Ascending aorta (tissue), 2 donors: ENCODE measurements at regions of chr3 and their contacts with region 1.

Region 1: DNA sequence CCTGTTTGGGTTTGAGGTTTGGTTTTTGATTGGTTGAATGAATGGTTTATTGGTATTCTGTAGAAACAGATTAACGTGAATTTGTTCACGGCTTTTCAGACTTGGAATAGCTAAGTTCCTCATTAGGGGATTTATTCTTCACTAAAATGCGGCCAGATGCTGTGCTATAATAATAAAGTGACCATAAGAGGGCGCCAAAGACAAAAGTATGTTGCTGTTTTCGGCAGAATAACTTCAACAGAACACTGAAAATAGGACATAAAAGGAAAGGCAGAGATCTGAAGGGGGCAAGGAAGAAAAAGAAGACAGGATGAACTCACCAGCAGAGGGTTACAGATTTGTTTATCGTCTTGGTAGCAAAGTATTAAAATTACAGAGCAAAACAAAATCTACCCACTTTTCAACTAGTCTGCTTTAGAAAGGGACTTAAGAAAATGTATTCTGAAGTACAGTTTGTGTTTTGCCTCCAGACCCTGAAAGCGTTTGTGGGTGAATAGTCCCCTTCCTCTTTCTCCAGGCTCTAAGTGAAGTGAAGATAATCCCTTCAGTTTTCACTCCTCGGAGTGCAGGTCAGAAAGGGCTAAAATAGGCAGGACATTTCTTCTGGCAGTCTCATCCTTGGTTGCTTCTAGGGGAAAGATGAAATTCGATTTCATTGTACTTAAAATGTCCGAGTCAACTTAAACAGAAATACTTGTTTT is 147.6 kb downstream of the IL20RB start:
- DNase-seq: no peak
- H3K4me3 ChIP-seq: peak overlapping the region in 1 of 2 donors; percentile 3
- H3K27ac ChIP-seq: no peak overlapping the region
- H3K4me1 ChIP-seq: no peaks in the 10 kb centered on the region
- H3K27me3 ChIP-seq: no peaks in the 10 kb centered on the region
- CTCF ChIP-seq: peak; percentile 29 to 72 (median 51)

Region 2: DNA sequence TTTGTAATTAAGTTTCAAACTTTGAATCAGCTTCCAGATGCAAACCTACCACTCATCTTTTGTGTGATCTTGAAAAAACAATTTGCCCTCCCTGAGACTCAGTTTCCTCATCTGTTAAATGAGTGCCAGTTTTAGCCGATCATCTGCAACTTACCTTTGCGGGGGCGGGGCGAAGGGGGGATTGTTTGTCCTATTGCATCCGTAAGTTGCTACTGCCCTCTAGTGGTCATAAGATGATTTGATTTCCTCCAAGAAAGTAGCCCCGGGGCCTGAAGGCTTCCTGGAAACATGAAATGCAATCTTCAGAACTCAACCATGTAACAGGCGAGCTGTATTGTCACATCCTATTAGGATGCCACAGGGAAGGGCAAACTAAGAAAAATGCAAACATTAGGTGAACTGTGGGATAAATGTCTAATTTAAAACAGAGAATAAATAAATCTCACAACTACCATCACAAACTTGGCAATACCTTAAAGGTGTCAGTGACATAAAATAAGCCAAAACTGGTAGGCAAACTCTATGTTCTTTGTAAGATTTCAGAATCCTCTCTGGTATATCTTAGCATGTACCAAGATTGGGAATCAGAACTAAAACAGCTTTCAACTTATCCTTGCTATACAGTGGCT is 841.0 kb after region 1 on chr3:
- intact Hi-C with region 1: loop called (anchors 2 kb)
- DNase-seq: no peak
- H3K4me3 ChIP-seq: no peak overlapping the region
- H3K27ac ChIP-seq: no peak overlapping the region
- H3K4me1 ChIP-seq: no peaks in the 10 kb centered on the region
- H3K27me3 ChIP-seq: no peaks in the 10 kb centered on the region
- CTCF ChIP-seq: peak in 2 of 3 experiments; percentile 38 to 49

Region 3: DNA sequence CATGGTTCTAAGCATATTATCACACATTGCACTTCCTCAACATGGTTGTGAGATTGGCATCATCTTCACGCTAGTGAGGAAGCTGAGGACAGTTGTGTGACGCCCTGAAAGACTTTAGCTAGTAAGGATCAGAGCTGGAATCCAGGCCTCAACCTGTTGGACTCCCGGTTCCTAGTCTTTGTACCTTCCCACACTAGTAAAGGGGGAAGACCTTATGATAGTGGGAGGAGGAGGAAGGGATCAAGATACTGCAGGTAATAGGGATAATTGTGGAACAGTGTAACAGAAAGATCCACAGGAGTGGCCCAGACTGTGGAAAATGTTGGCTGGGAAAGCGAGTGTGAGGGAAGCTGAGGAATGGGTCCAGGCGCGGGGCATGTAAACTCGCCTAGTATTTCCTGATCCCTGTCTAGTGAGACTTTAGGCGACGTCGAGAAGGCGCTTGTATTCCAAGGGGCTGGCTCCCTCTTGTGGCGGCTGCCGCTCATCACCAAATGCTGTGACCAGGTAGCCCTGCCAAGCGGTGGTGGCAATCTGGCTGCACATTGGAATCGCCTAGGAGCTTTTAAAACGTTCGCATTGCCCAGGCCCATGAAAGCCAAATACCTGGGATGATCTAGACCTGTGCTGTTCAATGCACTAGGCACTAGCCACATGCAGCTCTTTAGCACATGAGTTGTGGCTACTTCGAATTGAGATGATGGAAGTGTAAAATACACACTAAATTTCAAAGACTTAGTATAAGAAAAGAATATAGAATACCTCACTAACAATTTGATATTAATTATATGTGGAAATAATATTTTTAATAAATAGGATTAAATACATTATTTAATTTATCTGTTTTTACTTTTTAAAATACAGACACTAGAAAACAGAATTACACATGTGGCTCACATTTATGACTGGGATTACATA is 865.7 kb after region 1 on chr3:
- intact Hi-C with region 1: loop called (anchors 1 kb)
- DNase-seq: peak in 1 of 2 donors; percentile 72
- H3K4me3 ChIP-seq: no peak overlapping the region
- H3K27ac ChIP-seq: no peak overlapping the region
- H3K4me1 ChIP-seq: no peaks in the 10 kb centered on the region
- H3K27me3 ChIP-seq: no peaks in the 10 kb centered on the region
- CTCF ChIP-seq: peak; percentile 24 to 73 (median 60)